ENCODE measurements at regions of chr1 and their contacts with region 1.

Region 1: GRCh38 chr1:201254625-201255506 is 28.4 kb upstream of the PKP1 start:
- DNase-seq: no peak
- H3K4me3 ChIP-seq: no peak overlapping the region
- H3K27me3 ChIP-seq: peaks cover 1% of the 10 kb centered on the region; the same call in 1 of the 2 replicates
- CTCF ChIP-seq: peak; percentile 99

Region 2: GRCh38 chr1:201266774-201267173 is 11.9 kb after region 1 on chr1:
- CTCF ChIA-PET with region 1: interaction called, 12 read pairs
- POLR2A ChIA-PET with region 1: no interaction called
- DNase-seq: peak; percentile 64
- H3K4me3 ChIP-seq: no peak overlapping the region
- H3K27me3 ChIP-seq: no peaks in the 10 kb centered on the region
- CTCF ChIP-seq: no peak

Region 3: DNA sequence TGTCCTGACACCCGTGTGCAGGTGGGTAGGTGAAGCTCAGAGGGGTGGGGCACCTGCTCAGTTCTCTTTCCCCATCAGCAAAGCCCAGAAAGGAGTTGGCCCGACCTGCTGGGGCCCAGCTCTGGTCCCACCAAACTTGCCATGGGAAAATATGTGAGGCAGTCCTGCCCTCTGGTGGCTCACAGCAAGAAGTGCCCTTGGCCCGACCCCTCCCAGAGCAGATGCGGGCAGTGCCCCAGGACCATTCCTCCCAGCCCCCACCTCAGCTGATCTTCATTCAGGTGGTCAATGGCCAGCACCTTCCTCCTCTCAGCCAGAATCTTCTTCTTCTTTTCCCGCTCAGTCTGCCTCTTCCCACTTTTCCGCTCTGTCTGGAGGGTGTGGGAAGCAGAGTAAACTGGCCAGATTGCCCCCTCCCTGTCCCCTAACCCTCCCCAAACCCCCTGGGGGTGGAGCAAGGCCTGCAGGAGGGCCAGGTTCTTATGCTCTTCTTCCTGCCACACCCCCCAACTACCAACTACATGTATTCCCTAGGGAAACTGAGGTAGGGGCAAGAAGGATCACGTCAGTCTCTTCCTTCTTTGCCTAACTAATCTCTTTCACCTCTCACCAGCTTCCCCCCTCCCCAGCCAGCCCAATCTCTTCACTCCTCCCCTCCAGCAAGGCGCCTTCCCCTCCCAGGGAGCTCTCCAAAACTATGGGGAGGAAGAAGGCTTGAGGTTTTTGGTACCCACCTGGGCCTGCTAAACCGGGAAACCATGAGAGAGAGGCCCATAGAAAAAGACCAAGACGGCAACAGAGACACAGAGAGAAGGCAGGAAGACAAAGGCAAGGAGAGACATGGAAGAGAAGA is 107.0 kb after region 1 on chr1:
- CTCF ChIA-PET with region 1: interaction called, 144 read pairs
- POLR2A ChIA-PET with region 1: no interaction called
- DNase-seq: no peak
- H3K4me3 ChIP-seq: no peak overlapping the region
- H3K27me3 ChIP-seq: peaks cover 9% of the 10 kb centered on the region
- CTCF ChIP-seq: peak; percentile 82